ENCODE measurements at regions of chr7 and their contacts with region 1.

Region 1: GRCh38 chr7:100126931-100127865 is at the start of gene MBLAC1:
- DNase-seq: peak; percentile 84 to 98 (median 91)
- ATAC-seq: peak; percentile 75 to 77
- H3K4me3 Mint-ChIP-seq: peak within 1 kb of the TSS; percentile 97 to 100 (median 99)
- H3K27ac Mint-ChIP-seq: peak within 1 kb of the TSS; percentile 99 to 100 (median 100)
- H3K4me1 Mint-ChIP-seq: peaks cover 14 to 49% (median 45%) of the 10 kb centered on the region in 4 donors
- H3K27me3 Mint-ChIP-seq: no peaks in the 10 kb centered on the region
- polyA plus RNA-seq, gene MBLAC1: 2.1 to 2.3 (median 2.1) TPM

Region 2: GRCh38 chr7:99762680-99763327 is 364.4 kb before region 1 on chr7:
- POLR2A ChIA-PET with region 1: no interaction called
- DNase-seq: no peak
- ATAC-seq: no peak
- H3K4me3 Mint-ChIP-seq: no peak overlapping the region
- H3K27ac Mint-ChIP-seq: no peak overlapping the region
- H3K4me1 Mint-ChIP-seq: peaks cover 0 to 6% (median 0%) of the 10 kb centered on the region in 4 donors
- H3K27me3 Mint-ChIP-seq: peaks cover 0 to 9% (median 0%) of the 10 kb centered on the region in 5 donors

Region 3: GRCh38 chr7:99918959-99919813 is 208.0 kb before region 1 on chr7 and contains the start of gene TRIM4:
- POLR2A ChIA-PET with region 1: interaction called, 10 read pairs
- DNase-seq: peak; percentile 76 to 94 (median 87)
- ATAC-seq: peak; percentile 97 to 98
- H3K4me3 Mint-ChIP-seq: peak within 1 kb of the TSS; percentile 89 to 98 (median 94)
- H3K27ac Mint-ChIP-seq: peak within 1 kb of the TSS; percentile 96 to 99 (median 98)
- H3K4me1 Mint-ChIP-seq: peaks cover 37 to 63% (median 54%) of the 10 kb centered on the region in 4 donors
- H3K27me3 Mint-ChIP-seq: no peaks in the 10 kb centered on the region
- polyA plus RNA-seq, gene TRIM4: 22.2 to 32.2 (median 31.0) TPM

Region 4: GRCh38 chr7:100088621-100089457 is 38.4 kb before region 1 on chr7 and contains the start of gene COPS6:
- POLR2A ChIA-PET with region 1: interaction called, 22 read pairs
- DNase-seq: peak; percentile 71 to 92 (median 86)
- ATAC-seq: peak; percentile 82 to 90
- H3K4me3 Mint-ChIP-seq: peak within 1 kb of the TSS; percentile 80 to 92 (median 90)
- H3K27ac Mint-ChIP-seq: peak within 1 kb of the TSS; percentile 92 to 98 (median 95)
- H3K4me1 Mint-ChIP-seq: peaks cover 13 to 28% (median 22%) of the 10 kb centered on the region in 4 donors
- H3K27me3 Mint-ChIP-seq: no peaks in the 10 kb centered on the region
- polyA plus RNA-seq, gene COPS6: 107 to 145 (median 121) TPM

Region 5: GRCh38 chr7:100158229-100159098 is 31.3 kb after region 1 on chr7 and contains the start of gene TRAPPC14:
- POLR2A ChIA-PET with region 1: interaction called, 13 read pairs
- DNase-seq: peak; percentile 80 to 94 (median 88)
- ATAC-seq: peak; percentile 77 to 85
- H3K4me3 Mint-ChIP-seq: peak within 1 kb of the TSS; percentile 79 to 90 (median 88)
- H3K27ac Mint-ChIP-seq: peak within 1 kb of the TSS; percentile 77 to 95 (median 92)
- H3K4me1 Mint-ChIP-seq: peaks cover 18 to 64% (median 55%) of the 10 kb centered on the region in 4 donors
- H3K27me3 Mint-ChIP-seq: no peaks in the 10 kb centered on the region
- polyA plus RNA-seq, gene TRAPPC14: 2.1 to 4.5 (median 2.4) TPM

Region 6: GRCh38 chr7:100221231-100221718 is 94.1 kb after region 1 on chr7:
- POLR2A ChIA-PET with region 1: interaction called, 24 read pairs
- DNase-seq: peak; percentile 54 to 94 (median 84)
- ATAC-seq: peak; percentile 62 to 80
- H3K4me3 Mint-ChIP-seq: peak overlapping the region; percentile 88 to 99 (median 96)
- H3K27ac Mint-ChIP-seq: peak overlapping the region; percentile 96 to 100 (median 98)
- H3K4me1 Mint-ChIP-seq: peaks cover 26 to 80% (median 71%) of the 10 kb centered on the region in 4 donors
- H3K27me3 Mint-ChIP-seq: peaks cover 0 to 2% (median 0%) of the 10 kb centered on the region in 5 donors

Measured in naive thymus-derived CD8-positive, alpha-beta T cell (primary cell).